ENCODE measurements at regions of chr5 and their contacts with region 1.

Region 1: DNA sequence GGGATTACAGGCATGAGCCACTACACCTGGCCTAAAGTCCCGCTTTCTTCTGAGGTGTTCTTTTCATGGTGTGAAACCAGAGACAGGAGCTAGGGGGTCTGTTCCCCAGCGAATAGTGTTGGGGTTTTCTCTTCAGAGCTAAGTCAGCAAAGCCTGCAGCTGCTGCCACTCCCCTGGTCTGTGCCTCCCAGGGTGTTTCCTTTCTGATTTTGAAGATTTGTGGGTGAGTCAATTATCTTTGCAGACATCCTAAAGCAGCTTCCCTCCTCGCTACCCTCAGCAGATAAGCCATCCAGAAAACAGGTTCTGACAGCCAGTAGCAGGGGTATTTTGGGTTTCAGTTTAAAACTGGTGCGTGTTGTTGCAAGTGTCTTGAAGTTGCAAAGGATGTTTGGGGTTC is 72.0 kb upstream of the IQGAP2 start:
- DNase-seq: peak; percentile 60
- ATAC-seq: peak; percentile 79
- H3K4me3 Mint-ChIP-seq: peak overlapping the region; percentile 45
- H3K27ac Mint-ChIP-seq: peak overlapping the region; percentile 89
- H3K4me1 Mint-ChIP-seq: peaks cover 59% of the 10 kb centered on the region
- H3K27me3 Mint-ChIP-seq: no peaks in the 10 kb centered on the region

Region 2: GRCh38 chr5:76209297-76209696 is 121.8 kb before region 1 on chr5:
- CTCF ChIA-PET with region 1: no interaction called
- POLR2A ChIA-PET with region 1: no interaction called
- DNase-seq: no peak
- ATAC-seq: no peak
- H3K4me3 Mint-ChIP-seq: no peak overlapping the region
- H3K27ac Mint-ChIP-seq: no peak overlapping the region
- H3K4me1 Mint-ChIP-seq: no peaks in the 10 kb centered on the region
- H3K27me3 Mint-ChIP-seq: peaks cover 18% of the 10 kb centered on the region

Region 3: GRCh38 chr5:76291305-76292077 is 39.6 kb before region 1 on chr5:
- CTCF ChIA-PET with region 1: no interaction called
- POLR2A ChIA-PET with region 1: no interaction called
- DNase-seq: no peak
- ATAC-seq: no peak
- H3K4me3 Mint-ChIP-seq: no peak overlapping the region
- H3K27ac Mint-ChIP-seq: no peak overlapping the region
- H3K4me1 Mint-ChIP-seq: peaks cover 8% of the 10 kb centered on the region
- H3K27me3 Mint-ChIP-seq: peaks cover 10% of the 10 kb centered on the region

Region 4: GRCh38 chr5:76341651-76342334 is 10.7 kb after region 1 on chr5:
- CTCF ChIA-PET with region 1: interaction called, 10 read pairs
- POLR2A ChIA-PET with region 1: interaction called, 4 read pairs
- DNase-seq: no peak
- ATAC-seq: no peak
- H3K4me3 Mint-ChIP-seq: no peak overlapping the region
- H3K27ac Mint-ChIP-seq: peak overlapping the region; percentile 56
- H3K4me1 Mint-ChIP-seq: peaks cover 25% of the 10 kb centered on the region
- H3K27me3 Mint-ChIP-seq: no peaks in the 10 kb centered on the region

Region 5: DNA sequence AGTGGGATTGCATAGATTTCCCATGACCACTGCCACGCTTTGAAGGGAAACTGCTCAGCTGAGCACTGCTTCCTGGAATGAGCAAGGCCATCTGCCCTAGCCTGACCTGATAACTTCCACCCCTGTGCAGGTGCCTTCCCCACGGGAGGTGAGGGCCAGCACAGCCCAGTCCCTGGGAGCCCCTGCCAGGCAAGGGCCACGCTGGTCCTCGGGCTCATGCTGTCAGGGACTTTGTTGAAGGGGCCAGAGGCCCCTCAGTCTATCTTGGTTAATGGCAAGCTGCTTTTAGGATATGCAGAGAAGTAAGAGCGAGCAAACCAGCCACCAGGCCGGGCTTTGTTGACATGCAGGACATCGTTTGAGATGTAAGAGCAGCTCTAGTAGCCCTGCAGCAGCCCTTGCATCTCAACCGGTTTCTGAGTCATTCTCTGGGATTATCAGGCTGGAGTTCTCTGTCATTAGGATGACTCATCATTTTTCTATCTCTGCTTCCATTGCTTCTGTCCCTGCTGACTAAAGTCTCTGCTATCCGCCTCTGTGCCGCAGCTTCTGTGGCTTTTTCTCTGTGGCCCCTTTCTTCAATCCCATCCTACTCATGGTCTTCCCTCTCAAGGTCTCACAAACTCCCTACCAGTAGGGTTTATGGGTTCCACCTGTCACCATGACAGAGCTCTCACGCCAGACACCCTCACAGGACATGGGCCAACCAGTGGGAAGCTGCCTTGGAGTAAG is 41.4 kb after region 1 on chr5:
- CTCF ChIA-PET with region 1: no interaction called
- POLR2A ChIA-PET with region 1: no interaction called
- DNase-seq: no peak
- ATAC-seq: no peak
- H3K4me3 Mint-ChIP-seq: no peak overlapping the region
- H3K27ac Mint-ChIP-seq: peak overlapping the region; percentile 10
- H3K4me1 Mint-ChIP-seq: peaks cover 28% of the 10 kb centered on the region
- H3K27me3 Mint-ChIP-seq: no peaks in the 10 kb centered on the region